ENCODE measurements at regions of chr15 and their contacts with region 1.

Region 1: GRCh38 chr15:45157974-45158373 is 28.2 kb downstream of the DUOX1 start:
- DNase-seq: no peak
- ATAC-seq: peak in 2 of 4 donors; percentile 10 to 21
- H3K4me3 ChIP-seq: no peak overlapping the region
- H3K27ac ChIP-seq: no peak overlapping the region
- H3K4me1 ChIP-seq: peaks cover 0 to 6% (median 4%) of the 10 kb centered on the region in 12 donors
- H3K27me3 ChIP-seq: no peaks in the 10 kb centered on the region
- CTCF ChIP-seq: no peak
- POLR2A ChIP-seq: no peak

Region 2: GRCh38 chr15:45268135-45268534 is 110.2 kb after region 1 on chr15:
- intact Hi-C with region 1: loop called in 1 of 10 experiments (anchors 5 kb)
- DNase-seq: no peak
- ATAC-seq: no peak
- H3K4me3 ChIP-seq: no peak overlapping the region
- H3K27ac ChIP-seq: no peak overlapping the region
- H3K4me1 ChIP-seq: no peaks in the 10 kb centered on the region
- H3K27me3 ChIP-seq: no peaks in the 10 kb centered on the region
- CTCF ChIP-seq: no peak
- POLR2A ChIP-seq: no peak

Region 3: GRCh38 chr15:45304711-45305110 is 146.7 kb after region 1 on chr15:
- intact Hi-C with region 1: no loop called
- DNase-seq: no peak
- ATAC-seq: no peak
- H3K4me3 ChIP-seq: no peak overlapping the region
- H3K27ac ChIP-seq: no peak overlapping the region
- H3K4me1 ChIP-seq: peaks cover 0 to 11% (median 3%) of the 10 kb centered on the region in 12 donors
- H3K27me3 ChIP-seq: peaks cover 0 to 2% (median 0%) of the 10 kb centered on the region in 9 donors
- CTCF ChIP-seq: no peak
- POLR2A ChIP-seq: no peak

Measured in heart left ventricle (tissue), 16 donors.